Aorta (tissue), 5 donors: ENCODE measurements at regions of chr16 and their contacts with region 1.

Region 1: DNA sequence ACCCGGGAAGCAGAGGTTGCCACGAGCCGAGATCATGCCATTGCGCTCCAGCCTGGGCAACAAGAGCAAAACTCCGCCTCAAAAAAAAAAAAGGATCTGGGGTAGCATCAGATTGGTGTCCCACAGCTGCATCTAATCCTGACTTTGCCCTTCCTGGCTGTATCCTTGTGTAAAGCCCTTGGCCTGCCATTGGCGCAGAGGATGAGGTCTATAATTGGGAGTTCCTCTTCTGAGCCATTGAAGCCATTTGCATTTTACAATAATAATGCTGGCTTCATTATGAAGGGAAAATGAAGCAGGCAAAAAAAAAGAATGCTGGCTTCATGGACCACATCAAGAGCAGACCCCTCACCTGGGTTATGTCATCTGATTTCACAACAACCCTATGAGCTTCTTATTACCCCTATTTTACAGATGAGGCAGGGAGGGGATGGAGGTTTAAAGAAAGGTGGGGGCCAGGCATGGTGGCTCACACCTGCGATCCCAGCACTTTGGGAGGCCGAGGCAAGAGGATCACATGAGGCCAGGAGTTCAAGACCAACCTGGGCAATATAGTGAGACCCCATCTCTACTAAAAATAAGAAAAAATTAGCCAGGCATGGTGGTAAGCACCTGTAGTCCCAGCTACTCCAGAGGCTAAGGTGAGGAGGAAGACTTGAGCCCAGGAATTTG is 1.2 kb upstream of the LITAFD start:
- DNase-seq: peak in 1 of 2 donors; percentile 9
- ATAC-seq: no peak
- H3K4me3 ChIP-seq: no peak overlapping the region
- H3K27ac ChIP-seq: no peak overlapping the region
- H3K4me1 ChIP-seq: no peaks in the 10 kb centered on the region
- H3K27me3 ChIP-seq: no peaks in the 10 kb centered on the region

Region 2: GRCh38 chr16:8660841-8661301 is 220.1 kb before region 1 on chr16:
- intact Hi-C with region 1: loop called (anchors 2 kb)
- DNase-seq: peak; percentile 63 to 86
- ATAC-seq: peak; percentile 73
- H3K4me3 ChIP-seq: no peak overlapping the region
- H3K27ac ChIP-seq: no peak overlapping the region
- H3K4me1 ChIP-seq: no peaks in the 10 kb centered on the region
- H3K27me3 ChIP-seq: no peaks in the 10 kb centered on the region